ENCODE measurements at regions of chr20 and their contacts with region 1.

Region 1: DNA sequence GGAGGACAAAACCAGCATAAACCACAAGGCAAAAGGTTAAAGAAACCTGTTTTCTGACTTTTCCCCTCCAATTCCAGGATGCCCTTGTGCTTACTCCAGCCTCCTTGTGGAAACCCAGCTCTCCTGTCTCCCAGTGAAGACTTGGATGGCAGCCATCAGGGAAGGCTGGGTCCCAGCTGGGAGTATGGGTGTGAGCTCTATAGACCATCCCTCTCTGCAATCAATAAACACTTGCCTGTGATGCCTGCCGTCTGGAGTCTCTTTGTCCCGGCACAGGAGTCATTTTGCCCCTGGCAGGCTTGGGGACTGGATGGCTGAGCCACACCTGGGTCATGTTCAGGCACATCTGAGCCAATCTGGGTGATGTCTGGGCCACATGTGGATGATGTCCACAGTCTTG is 26.6 kb downstream of the BPIFB1 start:
- DNase-seq: no peak
- ATAC-seq: no peak
- H3K4me3 ChIP-seq: no peak overlapping the region
- H3K27ac ChIP-seq: no peak overlapping the region
- H3K4me1 ChIP-seq: peaks cover 2% of the 10 kb centered on the region; the same call in 1 of the 2 replicates
- H3K27me3 ChIP-seq: no peaks in the 10 kb centered on the region
- CTCF ChIP-seq: no peak

Region 2: DNA sequence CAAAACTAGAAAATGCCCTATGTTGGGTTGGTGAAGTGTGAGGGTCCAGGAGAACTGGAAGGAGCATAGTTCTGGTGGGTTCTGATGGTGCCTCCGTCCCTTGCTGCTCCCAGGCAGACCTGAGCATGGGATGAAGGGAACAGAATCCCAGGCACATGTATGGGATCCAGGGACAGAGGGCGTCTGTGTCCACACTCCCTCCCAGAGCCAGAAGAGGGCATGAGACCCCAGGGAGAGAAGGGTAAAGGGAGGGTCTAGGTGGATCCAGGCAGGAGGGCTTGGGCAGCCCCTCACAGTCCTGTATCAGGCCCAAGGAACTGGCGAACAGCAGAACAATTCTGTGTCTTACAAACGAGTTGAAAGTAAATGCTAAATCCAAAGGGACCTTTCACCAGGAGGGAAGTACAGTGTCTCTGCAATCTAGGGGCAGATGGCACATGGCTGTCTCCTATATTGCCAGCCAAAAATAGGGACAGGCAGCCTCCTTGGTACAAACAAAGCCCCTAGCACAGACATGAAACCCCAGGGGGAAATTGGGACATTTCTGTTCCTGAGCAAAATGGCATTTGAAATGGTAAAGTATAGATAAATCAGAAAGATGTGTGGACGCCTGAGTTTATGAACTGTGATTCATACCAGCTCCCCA is 76.4 kb before region 1 on chr20:
- CTCF ChIA-PET with region 1: no interaction called
- POLR2A ChIA-PET with region 1: no interaction called
- in situ Hi-C with region 1: no loop called
- intact Hi-C with region 1: no loop called
- DNase-seq: no peak
- ATAC-seq: no peak
- H3K4me3 ChIP-seq: no peak overlapping the region
- H3K27ac ChIP-seq: no peak overlapping the region
- H3K4me1 ChIP-seq: no peaks in the 10 kb centered on the region
- H3K27me3 ChIP-seq: peaks cover 21% of the 10 kb centered on the region
- CTCF ChIP-seq: no peak; the same call in 1 of the 2 replicates

Region 3: DNA sequence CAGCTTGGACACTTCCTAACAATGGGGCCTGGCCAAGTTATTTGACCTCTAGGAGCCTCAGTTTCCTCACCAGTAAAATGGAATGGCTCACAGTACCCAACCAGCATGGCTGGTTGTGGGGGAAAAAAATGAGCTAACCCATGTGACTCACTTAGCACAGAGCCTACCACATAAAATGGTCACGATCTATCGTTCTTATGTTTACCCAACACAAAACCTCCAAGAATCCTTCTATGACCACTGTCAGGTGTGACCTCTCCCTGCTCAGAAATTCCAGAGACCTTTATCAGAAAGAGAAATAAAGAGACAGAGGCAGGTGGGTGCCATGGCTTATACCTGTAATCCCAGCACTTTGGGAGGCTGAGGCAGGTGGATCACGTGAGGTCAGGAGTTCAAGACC is 12.8 kb after region 1 on chr20:
- CTCF ChIA-PET with region 1: no interaction called
- POLR2A ChIA-PET with region 1: no interaction called
- in situ Hi-C with region 1: no loop called
- intact Hi-C with region 1: no loop called
- DNase-seq: no peak
- ATAC-seq: no peak
- H3K4me3 ChIP-seq: no peak overlapping the region
- H3K27ac ChIP-seq: no peak overlapping the region
- H3K4me1 ChIP-seq: no peaks in the 10 kb centered on the region; the same call in 1 of the 2 replicates
- H3K27me3 ChIP-seq: no peaks in the 10 kb centered on the region
- CTCF ChIP-seq: no peak

Region 4: GRCh38 chr20:33351696-33352095 is 42.1 kb after region 1 on chr20:
- CTCF ChIA-PET with region 1: interaction called, 15 read pairs
- POLR2A ChIA-PET with region 1: no interaction called
- in situ Hi-C with region 1: no loop called
- intact Hi-C with region 1: no loop called
- DNase-seq: no peak
- ATAC-seq: no peak
- H3K4me3 ChIP-seq: no peak overlapping the region
- H3K27ac ChIP-seq: no peak overlapping the region
- H3K4me1 ChIP-seq: no peaks in the 10 kb centered on the region
- H3K27me3 ChIP-seq: no peaks in the 10 kb centered on the region
- CTCF ChIP-seq: no peak